Activated CD4-positive, alpha-beta T cell treated with anti-CD3 and anti-CD28 coated beads, Interleukin-2, amount 10 ng/mL, durations not matched to agents 7 days and 5 days (primary cell): ENCODE measurements at regions of chr3 and their contacts with region 1.

Region 1: DNA sequence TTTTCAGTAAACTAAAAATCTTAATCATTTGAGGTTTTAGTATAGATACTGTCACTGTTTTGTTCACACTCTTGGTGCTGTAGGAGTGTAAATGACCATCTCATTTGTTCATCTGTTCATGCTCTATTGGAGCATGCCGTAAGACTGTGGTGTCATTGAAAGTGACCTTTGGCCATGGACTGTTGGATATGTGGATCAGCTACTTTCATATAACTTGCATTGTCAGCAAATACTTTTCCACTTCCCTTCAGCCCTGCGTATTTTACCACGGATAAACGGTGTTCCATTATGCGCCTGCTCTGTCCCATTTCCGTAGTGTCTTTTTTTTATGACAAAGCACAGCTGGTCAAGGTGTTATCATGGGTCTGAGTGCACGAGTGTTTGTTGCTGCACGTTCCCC is 32.6 kb upstream of the SENP5 start:
- DNase-seq: no peak
- H3K4me3 Mint-ChIP-seq: no peak overlapping the region
- H3K27ac Mint-ChIP-seq: no peak overlapping the region
- H3K4me1 Mint-ChIP-seq: no peaks in the 10 kb centered on the region
- H3K27me3 Mint-ChIP-seq: no peaks in the 10 kb centered on the region

Region 2: GRCh38 chr3:196763179-196763822 is 71.8 kb before region 1 on chr3:
- CTCF ChIA-PET with region 1: no interaction called
- POLR2A ChIA-PET with region 1: interaction called, 11 read pairs
- DNase-seq: no peak
- H3K4me3 Mint-ChIP-seq: no peak overlapping the region
- H3K27ac Mint-ChIP-seq: peak overlapping the region; percentile 31
- H3K4me1 Mint-ChIP-seq: peaks cover 11% of the 10 kb centered on the region
- H3K27me3 Mint-ChIP-seq: no peaks in the 10 kb centered on the region